Panc1 (cell line): ENCODE measurements at regions of chr19 and their contacts with region 1.

Region 1: GRCh38 chr19:53707277-53707676 is 75.5 kb downstream of the DPRX start:
- DNase-seq: no peak
- ATAC-seq: no peak
- H3K4me3 ChIP-seq: no peak overlapping the region
- H3K27ac ChIP-seq: no peak overlapping the region
- H3K4me1 ChIP-seq: no peaks in the 10 kb centered on the region
- H3K27me3 ChIP-seq: no peaks in the 10 kb centered on the region
- CTCF ChIP-seq: no peak

Region 2: GRCh38 chr19:53492153-53492552 is 215.1 kb before region 1 on chr19:
- CTCF ChIA-PET with region 1: no interaction called
- POLR2A ChIA-PET with region 1: no interaction called
- in situ Hi-C with region 1: no loop called
- intact Hi-C with region 1: no loop called
- DNase-seq: no peak
- ATAC-seq: no peak
- H3K4me3 ChIP-seq: no peak overlapping the region
- H3K27ac ChIP-seq: no peak overlapping the region
- H3K4me1 ChIP-seq: no peaks in the 10 kb centered on the region
- H3K27me3 ChIP-seq: no peaks in the 10 kb centered on the region
- CTCF ChIP-seq: no peak

Region 3: DNA sequence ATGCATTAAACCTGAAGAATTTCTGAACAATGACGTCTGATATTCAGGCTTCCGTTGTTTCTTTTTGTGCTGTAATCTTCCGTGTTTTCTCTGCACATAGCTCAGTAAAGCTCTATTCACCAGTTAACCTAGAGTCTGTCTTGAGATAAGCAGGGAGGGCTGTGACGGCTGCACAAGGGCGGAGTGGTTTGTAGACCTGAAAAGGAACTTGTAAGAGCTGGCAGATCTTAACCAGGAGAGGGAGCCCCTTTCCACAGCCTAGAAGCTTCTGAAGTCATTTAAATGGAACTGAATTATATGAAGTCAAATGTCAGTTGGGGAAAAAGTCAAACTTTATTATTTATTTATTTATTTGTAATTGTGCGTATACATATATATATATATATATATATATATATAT is 48.0 kb before region 1 on chr19:
- CTCF ChIA-PET with region 1: no interaction called
- POLR2A ChIA-PET with region 1: interaction called, 12 read pairs
- in situ Hi-C with region 1: no loop called
- intact Hi-C with region 1: no loop called
- DNase-seq: peak; percentile 10
- ATAC-seq: peak; percentile 94
- H3K4me3 ChIP-seq: no peak overlapping the region
- H3K27ac ChIP-seq: peak overlapping the region; percentile 49; the same call in 1 of the 2 replicates
- H3K4me1 ChIP-seq: peaks cover 4% of the 10 kb centered on the region; the same call in 1 of the 2 replicates
- H3K27me3 ChIP-seq: no peaks in the 10 kb centered on the region
- CTCF ChIP-seq: peak; percentile 83; the same call in 1 of the 2 replicates

Region 4: DNA sequence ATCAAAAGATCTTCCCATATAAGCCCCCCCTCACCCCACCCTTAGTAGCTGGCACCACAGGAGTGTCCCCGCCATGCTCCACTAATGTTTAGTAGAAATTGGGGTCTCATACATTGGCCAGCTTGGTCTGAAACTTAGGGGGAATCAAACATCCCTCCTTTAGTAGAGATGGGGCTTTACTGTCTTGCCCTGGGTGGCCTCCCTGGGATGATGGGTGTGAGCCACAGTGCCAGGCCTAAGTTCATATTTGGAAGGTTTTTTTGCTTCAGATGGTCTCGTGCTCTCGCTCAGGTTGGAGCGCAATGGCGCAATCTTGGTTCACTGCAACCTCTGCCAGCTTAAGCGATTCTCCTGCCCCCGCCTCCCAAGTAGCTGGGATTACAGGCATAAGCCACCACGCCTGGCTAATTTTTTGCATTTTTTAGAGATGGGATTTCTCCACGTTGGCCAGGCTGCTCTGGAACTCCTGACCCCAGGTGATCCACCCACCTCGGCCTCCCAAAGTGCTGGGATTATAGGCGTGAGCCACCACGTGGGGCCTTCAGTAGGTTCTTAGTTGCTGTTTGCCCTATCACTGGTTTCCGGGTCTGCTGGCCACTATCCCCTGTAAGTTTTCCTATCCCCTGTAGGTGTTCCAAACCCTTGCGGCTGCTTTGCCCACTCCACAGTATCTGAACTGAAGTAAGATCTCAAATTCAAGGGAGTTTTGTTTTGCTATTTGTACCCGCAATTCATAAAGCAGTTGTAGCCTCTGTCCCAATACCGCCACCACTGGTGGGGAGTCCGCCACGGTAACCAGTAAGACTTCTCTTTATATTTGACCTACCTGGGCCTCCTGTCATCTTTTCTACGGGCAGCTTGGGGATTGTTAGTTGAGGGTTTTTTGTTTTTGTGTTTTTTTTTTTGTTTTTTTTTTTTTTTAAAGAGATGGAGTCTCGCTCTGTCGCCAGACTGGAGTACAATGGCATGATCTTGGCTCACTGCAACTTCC is 82.7 kb after region 1 on chr19:
- CTCF ChIA-PET with region 1: no interaction called
- POLR2A ChIA-PET with region 1: no interaction called
- in situ Hi-C with region 1: no loop called
- intact Hi-C with region 1: no loop called
- DNase-seq: no peak
- ATAC-seq: no peak
- H3K4me3 ChIP-seq: no peak overlapping the region
- H3K27ac ChIP-seq: no peak overlapping the region
- H3K4me1 ChIP-seq: no peaks in the 10 kb centered on the region
- H3K27me3 ChIP-seq: no peaks in the 10 kb centered on the region
- CTCF ChIP-seq: no peak

Region 5: DNA sequence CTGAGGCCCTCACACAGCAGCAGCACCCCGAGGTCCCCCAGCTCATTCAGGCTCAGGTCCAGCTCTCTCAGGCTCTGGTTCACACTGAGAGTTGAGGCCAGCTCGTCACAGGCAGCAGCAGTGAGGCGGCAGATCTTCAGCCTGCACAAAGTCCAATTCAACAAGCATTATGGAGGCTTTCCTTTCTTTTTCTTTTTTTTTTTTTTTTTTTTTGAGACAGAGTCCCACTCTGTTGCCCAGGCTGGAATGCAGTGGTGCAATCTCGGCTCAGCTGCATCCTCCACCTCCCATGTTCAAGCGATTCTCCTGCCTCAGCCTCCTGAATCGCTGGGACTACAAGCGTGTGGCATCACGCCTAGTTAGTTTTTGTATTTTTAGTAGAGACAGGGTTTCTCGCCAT is 94.0 kb after region 1 on chr19:
- CTCF ChIA-PET with region 1: no interaction called
- POLR2A ChIA-PET with region 1: interaction called, 13 read pairs
- in situ Hi-C with region 1: no loop called
- intact Hi-C with region 1: no loop called
- DNase-seq: no peak
- ATAC-seq: no peak
- H3K4me3 ChIP-seq: no peak overlapping the region
- H3K27ac ChIP-seq: no peak overlapping the region
- H3K4me1 ChIP-seq: no peaks in the 10 kb centered on the region
- H3K27me3 ChIP-seq: no peaks in the 10 kb centered on the region
- CTCF ChIP-seq: no peak

Region 6: GRCh38 chr19:53853707-53854106 is 146.4 kb after region 1 on chr19:
- CTCF ChIA-PET with region 1: no interaction called
- POLR2A ChIA-PET with region 1: no interaction called
- in situ Hi-C with region 1: no loop called
- intact Hi-C with region 1: no loop called
- DNase-seq: no peak
- ATAC-seq: no peak
- H3K4me3 ChIP-seq: no peak overlapping the region
- H3K27ac ChIP-seq: no peak overlapping the region
- H3K4me1 ChIP-seq: no peaks in the 10 kb centered on the region
- H3K27me3 ChIP-seq: no peaks in the 10 kb centered on the region
- CTCF ChIP-seq: no peak